Right cardiac atrium (tissue), 5 donors: ENCODE measurements at regions of chr5 and their contacts with region 1.

Region 1: DNA sequence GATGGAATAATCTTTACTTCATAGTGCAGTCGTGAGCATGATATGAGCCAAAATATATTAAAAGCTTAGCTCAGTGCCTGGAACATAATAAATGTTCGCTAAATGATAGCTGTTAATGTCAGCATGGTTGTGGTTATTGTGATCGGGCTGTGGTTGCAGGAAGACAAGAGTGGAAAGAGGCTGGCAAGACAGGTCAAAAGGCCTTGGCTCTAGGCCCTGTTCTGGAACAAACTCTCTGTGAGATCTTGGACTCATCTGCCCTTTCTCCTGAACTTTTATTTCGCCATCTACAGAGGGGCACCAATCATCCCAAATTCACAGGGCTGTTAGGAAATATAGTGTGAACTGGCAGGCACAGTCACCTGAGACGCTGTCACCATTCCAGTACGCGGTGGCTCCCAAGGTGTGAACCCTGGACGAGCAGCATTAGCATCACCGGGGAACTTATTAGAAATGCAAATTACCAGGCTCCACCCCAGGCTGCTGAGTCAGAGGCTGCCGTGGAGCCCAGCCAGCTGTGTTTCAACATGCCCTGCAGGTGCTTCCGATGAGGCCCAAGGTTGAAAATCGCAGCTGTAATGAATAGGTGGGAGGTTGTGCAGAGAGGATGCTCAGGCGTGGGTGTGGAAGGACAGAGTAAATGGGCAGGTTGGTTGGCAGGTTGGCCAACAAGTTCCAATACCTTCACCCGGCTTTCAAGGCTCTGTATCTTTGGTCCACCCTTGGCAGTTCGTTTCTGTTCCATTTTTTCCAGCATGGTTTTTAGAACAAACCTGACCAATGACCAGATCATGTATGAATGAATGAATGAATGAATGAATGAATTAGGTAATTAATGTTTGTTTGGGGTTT is 50.2 kb upstream of the SAP30L start:
- DNase-seq: no peak
- ATAC-seq: no peak
- H3K4me3 ChIP-seq: no peak overlapping the region
- H3K27ac ChIP-seq: no peak overlapping the region
- H3K4me1 ChIP-seq: no peaks in the 10 kb centered on the region
- H3K27me3 ChIP-seq: no peaks in the 10 kb centered on the region

Region 2: GRCh38 chr5:153981905-153982605 is 413.6 kb before region 1 on chr5:
- intact Hi-C with region 1: loop called in 3 of 4 experiments (anchors 5 to 10 kb)
- DNase-seq: no peak
- ATAC-seq: no peak
- H3K4me3 ChIP-seq: no peak overlapping the region
- H3K27ac ChIP-seq: no peak overlapping the region
- H3K4me1 ChIP-seq: no peaks in the 10 kb centered on the region
- H3K27me3 ChIP-seq: no peaks in the 10 kb centered on the region

Region 3: GRCh38 chr5:154157483-154158378 is 237.9 kb before region 1 on chr5:
- intact Hi-C with region 1: no loop called
- DNase-seq: no peak
- ATAC-seq: peak; percentile 60 to 62
- H3K4me3 ChIP-seq: no peak overlapping the region
- H3K27ac ChIP-seq: no peak overlapping the region
- H3K4me1 ChIP-seq: no peaks in the 10 kb centered on the region
- H3K27me3 ChIP-seq: no peaks in the 10 kb centered on the region

Region 4: GRCh38 chr5:154647114-154647760 is 251.6 kb after region 1 on chr5:
- intact Hi-C with region 1: no loop called
- DNase-seq: peak; percentile 43 to 79 (median 67)
- ATAC-seq: peak; percentile 69 to 73
- H3K4me3 ChIP-seq: peak overlapping the region; percentile 46
- H3K27ac ChIP-seq: no peak overlapping the region
- H3K4me1 ChIP-seq: no peaks in the 10 kb centered on the region
- H3K27me3 ChIP-seq: no peaks in the 10 kb centered on the region